Heart right ventricle (tissue), 16 donors: ENCODE measurements at regions of chr1 and their contacts with region 1.

Region 1: DNA sequence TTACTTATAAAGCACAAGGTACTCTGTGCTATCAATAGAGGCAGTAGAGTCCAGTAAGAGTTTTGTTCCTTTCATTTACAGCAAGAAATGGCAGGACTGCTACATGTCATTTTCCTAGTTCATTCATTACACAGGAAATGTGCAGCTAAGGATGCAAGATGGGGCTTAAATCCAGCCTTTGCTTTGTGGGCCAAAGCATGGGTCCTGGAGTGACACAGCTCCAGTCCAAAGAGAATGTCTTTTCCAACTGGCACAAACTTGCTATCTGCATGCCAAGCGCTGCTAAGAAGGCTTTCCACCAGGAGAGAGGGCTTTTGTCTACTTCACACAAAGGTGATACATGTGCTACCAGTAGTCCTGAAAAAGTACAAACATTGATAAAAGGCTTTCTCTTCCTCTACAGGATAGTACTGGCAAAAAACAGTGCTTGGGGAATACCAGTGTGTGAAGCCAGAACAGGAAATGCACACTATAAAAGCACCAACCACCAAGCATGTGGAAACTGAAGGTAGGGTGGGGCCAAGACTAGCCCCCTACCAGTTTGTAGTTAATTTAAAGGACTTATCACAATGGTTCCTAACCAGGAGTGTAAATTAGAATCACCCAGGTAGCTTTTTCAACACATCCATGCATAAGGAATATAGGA is 68.7 kb downstream of the ARID4B start:
- DNase-seq: no peak
- ATAC-seq: peak in 7 of 8 donors; percentile 16 to 55 (median 42)
- H3K4me3 ChIP-seq: no peak overlapping the region
- H3K27ac ChIP-seq: peak overlapping the region in 1 of 10 donors; percentile 5
- H3K4me1 ChIP-seq: peaks cover 0 to 38% (median 23%) of the 10 kb centered on the region in 9 donors
- H3K27me3 ChIP-seq: no peaks in the 10 kb centered on the region
- CTCF ChIP-seq: no peak

Region 2: GRCh38 chr1:234997201-234997895 is 261.9 kb before region 1 on chr1:
- intact Hi-C with region 1: no loop called
- DNase-seq: peak; percentile 97
- ATAC-seq: peak; percentile 91 to 98 (median 96)
- H3K4me3 ChIP-seq: peak overlapping the region in 5 of 10 donors; percentile 6 to 13 (median 12)
- H3K27ac ChIP-seq: peak overlapping the region; percentile 87 to 95 (median 92)
- H3K4me1 ChIP-seq: peaks cover 21 to 35% (median 30%) of the 10 kb centered on the region in 9 donors
- H3K27me3 ChIP-seq: no peaks in the 10 kb centered on the region
- CTCF ChIP-seq: no peak

Region 3: DNA sequence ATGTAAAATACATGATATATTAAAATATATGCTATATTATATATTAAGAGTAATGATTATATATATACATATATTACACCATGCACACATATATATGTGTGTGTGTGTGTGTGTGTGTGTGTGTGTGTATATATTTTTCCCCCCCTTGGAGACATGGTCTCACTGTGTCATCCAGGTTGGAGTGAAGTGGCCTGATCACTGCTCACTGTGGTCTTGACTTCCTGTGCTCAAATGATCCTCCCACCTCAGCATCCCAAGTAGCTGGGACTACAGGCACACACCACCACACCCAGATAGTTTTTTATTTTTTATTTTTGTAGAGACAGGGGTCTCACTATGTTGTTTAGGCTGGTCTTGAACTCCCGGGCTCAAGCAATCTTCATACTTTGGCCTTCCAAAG is 43.8 kb before region 1 on chr1:
- intact Hi-C with region 1: no loop called
- DNase-seq: no peak
- ATAC-seq: no peak
- H3K4me3 ChIP-seq: no peak overlapping the region
- H3K27ac ChIP-seq: no peak overlapping the region
- H3K4me1 ChIP-seq: no peaks in the 10 kb centered on the region
- H3K27me3 ChIP-seq: no peaks in the 10 kb centered on the region
- CTCF ChIP-seq: no peak

Region 4: DNA sequence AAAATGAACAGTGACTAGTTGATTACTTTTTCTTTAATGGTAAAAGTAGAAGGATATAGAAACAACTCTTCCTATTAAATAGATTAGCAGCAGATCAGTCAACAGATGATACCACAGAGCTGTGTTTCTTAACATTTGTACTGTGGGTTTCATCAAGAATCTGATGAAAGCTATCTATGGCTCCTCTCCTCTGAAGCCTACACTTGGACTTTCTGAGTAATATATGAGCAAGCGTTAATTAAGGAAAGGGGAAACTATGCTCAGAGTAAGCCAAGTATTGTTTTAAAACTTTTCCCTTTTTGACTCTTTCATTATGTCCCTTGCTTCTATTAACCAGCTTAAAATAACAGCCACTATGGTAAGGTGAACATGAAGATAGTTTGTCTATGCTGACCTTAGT is 57.9 kb after region 1 on chr1:
- intact Hi-C with region 1: loop called in 3 of 10 experiments (anchors 5 to 10 kb)
- DNase-seq: no peak
- ATAC-seq: no peak
- H3K4me3 ChIP-seq: no peak overlapping the region
- H3K27ac ChIP-seq: no peak overlapping the region
- H3K4me1 ChIP-seq: peaks cover 0 to 69% (median 35%) of the 10 kb centered on the region in 9 donors
- H3K27me3 ChIP-seq: no peaks in the 10 kb centered on the region
- CTCF ChIP-seq: no peak

Region 5: DNA sequence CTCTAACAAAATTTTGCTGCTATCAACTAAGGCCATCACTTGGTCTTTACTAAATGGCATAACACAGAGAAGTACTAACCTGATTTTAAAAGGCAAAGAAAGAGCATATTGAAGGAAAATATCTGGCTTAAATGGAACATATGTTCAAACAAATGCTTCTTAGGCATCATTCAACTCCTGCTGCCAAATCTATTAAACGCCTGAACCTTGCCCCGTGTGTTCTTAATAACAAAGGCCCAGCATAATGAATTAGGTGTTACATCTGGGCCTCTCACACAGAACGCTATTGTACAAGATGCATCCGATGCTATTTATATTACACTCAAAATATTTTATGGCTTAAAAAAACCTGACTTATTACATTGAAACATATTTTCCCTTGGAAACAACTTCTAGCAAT is 196.6 kb after region 1 on chr1:
- intact Hi-C with region 1: no loop called
- DNase-seq: no peak
- ATAC-seq: no peak
- H3K4me3 ChIP-seq: no peak overlapping the region
- H3K27ac ChIP-seq: no peak overlapping the region
- H3K4me1 ChIP-seq: no peaks in the 10 kb centered on the region
- H3K27me3 ChIP-seq: no peaks in the 10 kb centered on the region
- CTCF ChIP-seq: no peak